ENCODE measurements at regions of chr9 and their contacts with region 1.

Region 1: DNA sequence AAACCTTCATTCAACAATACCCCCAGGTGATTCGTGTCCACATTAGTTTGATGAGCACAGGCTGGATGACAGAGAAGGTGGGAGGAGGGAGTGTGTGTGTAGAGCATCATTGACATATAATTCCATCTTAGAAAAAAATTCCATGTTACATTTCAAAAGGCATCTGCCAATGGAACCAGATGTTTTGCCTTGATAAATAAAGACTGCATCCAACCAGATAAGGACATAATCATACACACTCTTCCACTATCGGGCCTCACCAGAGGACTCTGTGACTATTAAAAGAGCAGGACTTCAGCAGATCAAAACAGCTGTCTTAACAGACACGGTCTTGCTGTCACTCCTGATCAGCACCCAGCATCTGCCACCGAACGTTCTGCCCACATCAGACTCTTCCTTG is 96.4 kb upstream of the SPIN1 start:
- DNase-seq: no peak
- H3K4me3 ChIP-seq: no peak overlapping the region
- H3K27ac ChIP-seq: no peak overlapping the region
- H3K4me1 ChIP-seq: no peaks in the 10 kb centered on the region
- H3K27me3 ChIP-seq: no peaks in the 10 kb centered on the region
- CTCF ChIP-seq: no peak
- POLR2A ChIP-seq: no peak

Region 2: GRCh38 chr9:88236531-88237478 is 55.1 kb before region 1 on chr9:
- CTCF ChIA-PET with region 1: no interaction called
- POLR2A ChIA-PET with region 1: no interaction called
- dilution Hi-C with region 1: no loop called
- intact Hi-C with region 1: loop called (anchors 10 kb)
- DNase-seq: no peak
- H3K4me3 ChIP-seq: no peak overlapping the region
- H3K27ac ChIP-seq: no peak overlapping the region
- H3K4me1 ChIP-seq: no peaks in the 10 kb centered on the region
- H3K27me3 ChIP-seq: no peaks in the 10 kb centered on the region
- CTCF ChIP-seq: no peak
- POLR2A ChIP-seq: no peak